CD4-positive, alpha-beta T cell (primary cell): ENCODE measurements at regions of chr12 and their contacts with region 1.

Region 1: DNA sequence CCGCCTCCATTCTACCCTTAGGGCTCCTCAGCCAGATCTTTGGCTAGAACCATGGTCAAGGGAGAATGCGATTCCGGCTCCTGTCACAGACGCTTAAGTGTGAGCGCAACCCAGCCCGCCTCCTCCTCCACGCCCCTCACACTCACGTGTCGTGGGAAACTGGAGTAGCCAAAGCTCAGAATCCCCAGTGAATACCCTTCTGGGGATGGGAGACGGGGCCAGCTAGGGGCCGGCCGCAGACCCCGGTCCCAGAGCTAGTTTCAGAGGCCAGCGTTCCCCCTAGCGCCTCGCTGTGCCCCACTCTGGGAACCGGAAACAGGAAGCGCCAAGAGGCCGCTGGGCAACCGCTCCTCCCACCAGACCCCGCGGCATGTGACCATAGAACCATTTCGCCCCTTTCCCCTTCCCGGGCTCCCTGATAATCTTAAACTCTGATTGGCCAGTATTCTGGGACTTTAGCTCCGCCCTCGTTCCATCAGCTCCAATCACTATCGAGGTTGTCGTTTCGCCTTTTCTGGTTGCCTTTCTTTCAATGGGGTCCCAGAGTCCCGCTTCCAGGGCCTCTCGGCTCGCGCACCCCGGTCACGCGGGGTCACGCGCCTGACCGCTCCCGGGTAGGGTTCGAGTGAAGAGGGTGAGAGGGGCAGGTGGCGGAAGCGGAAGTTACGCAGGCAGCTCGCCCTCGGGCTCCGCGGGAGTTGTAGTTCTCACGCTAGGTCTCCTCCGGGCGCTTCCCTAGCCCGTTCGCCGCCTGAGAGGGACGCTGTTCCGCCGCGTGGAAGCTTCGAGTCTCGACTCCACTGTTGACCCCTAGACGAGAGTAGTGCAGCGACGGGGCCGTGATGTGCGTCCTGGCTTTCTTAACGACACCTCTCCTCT is at the start of gene M6PR:
- DNase-seq: peak; percentile 78 to 95 (median 84)
- ATAC-seq: peak; percentile 71
- H3K4me3 ChIP-seq: peak within 1 kb of the TSS; percentile 79
- H3K4me3 Mint-ChIP-seq: peak within 1 kb of the TSS; percentile 91
- H3K27ac ChIP-seq: peak within 1 kb of the TSS; percentile 95 to 99
- H3K27ac Mint-ChIP-seq: peak within 1 kb of the TSS; percentile 93
- H3K4me1 ChIP-seq: peaks cover 43% of the 10 kb centered on the region
- H3K4me1 Mint-ChIP-seq: peaks cover 72% of the 10 kb centered on the region
- H3K27me3 ChIP-seq: no peaks in the 10 kb centered on the region
- H3K27me3 Mint-ChIP-seq: no peaks in the 10 kb centered on the region
- CTCF ChIP-seq: peak; percentile 67
- total RNA-seq, gene M6PR: 53.4 to 55.8 TPM

Region 2: DNA sequence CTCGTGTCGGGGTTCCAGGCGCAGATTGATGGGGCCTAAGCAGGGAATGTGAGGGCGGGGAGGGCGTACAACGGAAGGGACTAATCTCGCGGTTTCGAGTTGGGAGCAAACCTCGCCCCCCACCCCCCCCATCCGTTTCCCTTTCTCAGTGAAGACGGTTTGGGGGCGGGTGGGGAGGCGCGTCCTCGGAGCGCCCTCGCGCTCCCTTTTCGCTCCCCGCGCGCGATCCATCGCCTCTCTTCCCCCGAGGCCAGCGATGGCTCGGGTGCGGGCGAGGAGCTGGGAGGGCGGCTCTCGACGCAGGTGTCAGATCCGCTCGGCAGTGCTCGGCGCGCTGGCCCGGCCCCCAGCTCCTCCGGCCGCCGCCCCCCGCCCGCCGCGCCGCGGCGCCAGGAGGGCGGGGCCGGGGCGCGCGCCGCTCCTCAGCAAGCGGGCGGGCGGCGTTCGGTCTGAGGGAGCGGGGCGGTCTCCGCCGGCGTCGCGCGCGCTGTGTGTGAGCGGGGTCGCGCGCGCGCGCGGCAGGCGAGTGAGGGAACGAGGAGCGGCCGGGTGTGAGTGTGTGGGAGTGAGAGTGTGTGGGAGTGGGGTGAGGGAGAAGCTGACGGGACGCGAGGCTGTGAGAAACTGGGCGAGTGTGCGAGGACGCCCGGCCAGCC is 252.0 kb before region 1 on chr12 and contains the start of gene RIMKLB:
- CTCF ChIA-PET with region 1: no interaction called
- POLR2A ChIA-PET with region 1: interaction called, 9 read pairs
- intact Hi-C with region 1: loop called in 1 of 2 experiments (anchors 2 kb)
- DNase-seq: peak; percentile 50 to 92 (median 76)
- ATAC-seq: peak; percentile 79
- H3K4me3 ChIP-seq: peak within 1 kb of the TSS; percentile 72
- H3K4me3 Mint-ChIP-seq: peak within 1 kb of the TSS; percentile 99
- H3K27ac ChIP-seq: peak within 1 kb of the TSS; percentile 32 to 62
- H3K27ac Mint-ChIP-seq: peak within 1 kb of the TSS; percentile 83
- H3K4me1 ChIP-seq: peaks cover 12% of the 10 kb centered on the region
- H3K4me1 Mint-ChIP-seq: peaks cover 46% of the 10 kb centered on the region
- H3K27me3 ChIP-seq: no peaks in the 10 kb centered on the region
- H3K27me3 Mint-ChIP-seq: no peaks in the 10 kb centered on the region
- CTCF ChIP-seq: no peak
- total RNA-seq, gene RIMKLB: 14.8 to 15.2 TPM

Region 3: DNA sequence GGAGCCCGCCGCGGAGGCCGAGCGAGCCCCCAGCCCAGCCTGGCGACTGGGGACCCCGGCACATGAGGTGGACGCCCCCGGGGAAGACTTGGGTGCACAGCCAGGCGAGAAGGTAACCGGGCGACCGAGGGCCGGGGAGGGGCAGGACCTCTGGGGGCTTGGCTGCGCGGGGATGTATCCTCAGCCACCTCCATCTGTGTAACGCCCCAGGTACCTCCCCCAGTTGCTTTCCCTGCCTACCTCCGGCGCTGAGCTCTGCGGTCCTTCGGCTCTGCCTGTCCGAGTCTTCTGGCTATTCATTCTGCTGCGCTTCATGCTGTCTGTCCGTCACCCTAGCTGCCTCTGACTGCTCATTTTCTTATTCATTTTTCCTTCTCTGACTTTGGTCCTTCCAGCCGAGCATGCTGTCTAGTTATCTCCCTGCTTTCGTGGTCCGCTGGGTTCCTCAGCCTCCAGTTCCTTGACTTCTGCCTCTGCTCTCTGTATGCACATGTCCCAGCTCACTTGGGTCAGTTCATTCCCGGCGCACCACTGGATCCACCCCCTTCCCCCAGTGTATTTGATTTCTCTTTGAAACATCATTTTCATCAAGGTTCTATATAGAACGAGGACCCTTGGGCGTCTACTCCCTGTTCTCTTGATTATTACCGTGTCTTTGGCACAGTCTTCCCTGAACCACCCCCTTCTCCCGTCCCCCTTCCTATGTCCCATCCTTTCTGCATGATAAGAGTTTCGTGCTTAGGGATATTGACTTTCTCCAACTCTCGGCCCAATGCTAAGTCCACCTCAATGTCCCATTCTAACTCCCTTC is 34.7 kb before region 1 on chr12:
- CTCF ChIA-PET with region 1: interaction called, 32 read pairs
- POLR2A ChIA-PET with region 1: interaction called, 24 read pairs
- intact Hi-C with region 1: loop called (anchors 2 kb)
- DNase-seq: peak; percentile 32 to 83 (median 50)
- ATAC-seq: peak; percentile 81
- H3K4me3 ChIP-seq: peak overlapping the region; percentile 85
- H3K4me3 Mint-ChIP-seq: no peak overlapping the region
- H3K27ac ChIP-seq: no peak overlapping the region
- H3K27ac Mint-ChIP-seq: no peak overlapping the region
- H3K4me1 ChIP-seq: peaks cover 16% of the 10 kb centered on the region
- H3K4me1 Mint-ChIP-seq: peaks cover 18% of the 10 kb centered on the region
- H3K27me3 ChIP-seq: no peaks in the 10 kb centered on the region
- H3K27me3 Mint-ChIP-seq: no peaks in the 10 kb centered on the region
- CTCF ChIP-seq: no peak

Region 4: GRCh38 chr12:8989413-8989812 is 39.8 kb after region 1 on chr12 and contains the start of gene KLRG1:
- CTCF ChIA-PET with region 1: interaction called, 8 read pairs
- POLR2A ChIA-PET with region 1: interaction called, 13 read pairs
- intact Hi-C with region 1: no loop called
- DNase-seq: peak in 2 of 14 experiments; percentile 34 to 63
- ATAC-seq: peak; percentile 37
- H3K4me3 ChIP-seq: peak within 1 kb of the TSS; percentile 50
- H3K4me3 Mint-ChIP-seq: peak within 1 kb of the TSS; percentile 71
- H3K27ac ChIP-seq: peak within 1 kb of the TSS; percentile 49 to 52
- H3K27ac Mint-ChIP-seq: peak within 1 kb of the TSS; percentile 63
- H3K4me1 ChIP-seq: peaks cover 50% of the 10 kb centered on the region
- H3K4me1 Mint-ChIP-seq: peaks cover 70% of the 10 kb centered on the region
- H3K27me3 ChIP-seq: no peaks in the 10 kb centered on the region
- H3K27me3 Mint-ChIP-seq: no peaks in the 10 kb centered on the region
- CTCF ChIP-seq: no peak
- total RNA-seq, gene KLRG1: 8.4 to 10.5 TPM

Region 5: DNA sequence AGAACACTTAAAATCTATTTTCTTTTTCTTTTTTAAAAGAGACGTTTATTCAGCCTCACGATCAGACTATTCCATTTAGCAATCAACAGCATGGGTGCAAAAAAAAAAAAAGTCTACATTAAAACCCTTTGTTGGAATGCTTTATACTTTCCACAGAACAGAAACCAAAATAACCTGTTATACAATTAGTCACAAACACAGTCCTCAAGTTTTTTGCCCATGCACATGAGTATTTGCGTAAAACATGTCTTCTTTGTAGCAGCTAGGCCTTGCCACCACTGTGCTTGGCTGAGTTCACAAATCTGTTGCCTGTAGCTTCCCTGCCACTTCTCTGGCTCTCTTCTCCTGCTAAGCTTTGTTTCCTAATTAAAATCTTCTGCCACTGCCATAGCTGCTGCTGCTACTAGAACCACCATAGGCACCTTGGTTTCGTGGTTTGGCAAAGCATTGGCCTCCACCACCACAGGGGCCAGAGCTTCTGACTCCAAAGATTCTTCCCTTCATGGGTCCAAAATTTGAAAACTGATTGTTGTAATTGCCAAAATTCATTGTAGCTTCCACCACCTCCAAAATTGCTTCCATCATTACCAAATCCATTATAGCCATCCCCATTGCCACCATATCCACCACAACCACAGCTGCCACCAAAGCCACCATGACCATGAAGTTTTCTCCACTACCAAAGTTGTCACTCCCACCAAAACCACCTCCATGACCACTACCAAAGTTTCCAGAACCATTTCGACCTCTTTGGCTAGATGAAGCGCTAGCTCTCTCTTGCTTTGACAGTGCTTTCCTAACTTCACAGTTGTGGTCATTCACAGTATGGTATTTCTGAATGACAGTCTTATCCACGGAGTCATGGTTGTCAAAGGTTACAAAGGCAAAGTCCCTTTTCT is 77.8 kb after region 1 on chr12:
- CTCF ChIA-PET with region 1: interaction called, 25 read pairs
- POLR2A ChIA-PET with region 1: interaction called, 70 read pairs
- intact Hi-C with region 1: loop called in 1 of 2 experiments (anchors 1 kb)
- DNase-seq: peak in 2 of 14 experiments; percentile 21 to 44
- ATAC-seq: no peak
- H3K4me3 ChIP-seq: no peak overlapping the region
- H3K4me3 Mint-ChIP-seq: peak overlapping the region; percentile 58
- H3K27ac ChIP-seq: peak overlapping the region; percentile 63 to 92
- H3K27ac Mint-ChIP-seq: no peak overlapping the region
- H3K4me1 ChIP-seq: peaks cover 83% of the 10 kb centered on the region
- H3K4me1 Mint-ChIP-seq: peaks cover 49% of the 10 kb centered on the region
- H3K27me3 ChIP-seq: no peaks in the 10 kb centered on the region
- H3K27me3 Mint-ChIP-seq: no peaks in the 10 kb centered on the region
- CTCF ChIP-seq: no peak

Region 6: DNA sequence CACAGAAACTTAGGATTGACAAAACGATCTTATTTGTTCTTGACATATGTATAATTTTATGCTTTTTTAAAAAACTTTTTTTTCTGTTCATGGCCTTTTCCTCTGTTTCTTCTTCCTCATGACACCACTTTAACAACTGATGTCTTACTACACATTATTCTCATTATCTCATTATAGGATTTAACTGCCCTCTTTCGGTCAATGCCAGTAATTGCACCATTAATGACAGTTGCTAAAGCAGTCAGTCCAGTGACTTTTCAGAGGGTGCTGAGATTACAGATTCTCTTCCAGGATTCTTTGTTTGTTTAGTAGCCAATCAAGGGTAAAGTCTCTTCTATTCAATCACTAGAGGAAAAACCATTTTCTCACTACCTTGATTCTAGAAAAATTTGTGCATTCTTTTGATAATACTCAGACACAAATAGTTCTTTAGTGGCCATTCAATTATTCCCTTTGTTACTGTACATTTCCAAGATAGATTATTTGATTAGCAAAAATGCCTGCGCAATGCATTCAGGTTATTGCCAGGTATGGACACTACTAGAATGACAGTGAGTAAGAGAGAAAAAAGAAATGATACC is 89.9 kb after region 1 on chr12:
- CTCF ChIA-PET with region 1: interaction called, 57 read pairs
- POLR2A ChIA-PET with region 1: interaction called, 71 read pairs
- intact Hi-C with region 1: loop called (anchors 1 kb)
- DNase-seq: peak in 4 of 14 experiments; percentile 25 to 80 (median 77)
- ATAC-seq: peak; percentile 89
- H3K4me3 ChIP-seq: no peak overlapping the region
- H3K4me3 Mint-ChIP-seq: peak overlapping the region; percentile 21
- H3K27ac ChIP-seq: no peak overlapping the region
- H3K27ac Mint-ChIP-seq: peak overlapping the region; percentile 80
- H3K4me1 ChIP-seq: peaks cover 39% of the 10 kb centered on the region
- H3K4me1 Mint-ChIP-seq: peaks cover 63% of the 10 kb centered on the region
- H3K27me3 ChIP-seq: no peaks in the 10 kb centered on the region
- H3K27me3 Mint-ChIP-seq: no peaks in the 10 kb centered on the region
- CTCF ChIP-seq: peak; percentile 88

Region 7: DNA sequence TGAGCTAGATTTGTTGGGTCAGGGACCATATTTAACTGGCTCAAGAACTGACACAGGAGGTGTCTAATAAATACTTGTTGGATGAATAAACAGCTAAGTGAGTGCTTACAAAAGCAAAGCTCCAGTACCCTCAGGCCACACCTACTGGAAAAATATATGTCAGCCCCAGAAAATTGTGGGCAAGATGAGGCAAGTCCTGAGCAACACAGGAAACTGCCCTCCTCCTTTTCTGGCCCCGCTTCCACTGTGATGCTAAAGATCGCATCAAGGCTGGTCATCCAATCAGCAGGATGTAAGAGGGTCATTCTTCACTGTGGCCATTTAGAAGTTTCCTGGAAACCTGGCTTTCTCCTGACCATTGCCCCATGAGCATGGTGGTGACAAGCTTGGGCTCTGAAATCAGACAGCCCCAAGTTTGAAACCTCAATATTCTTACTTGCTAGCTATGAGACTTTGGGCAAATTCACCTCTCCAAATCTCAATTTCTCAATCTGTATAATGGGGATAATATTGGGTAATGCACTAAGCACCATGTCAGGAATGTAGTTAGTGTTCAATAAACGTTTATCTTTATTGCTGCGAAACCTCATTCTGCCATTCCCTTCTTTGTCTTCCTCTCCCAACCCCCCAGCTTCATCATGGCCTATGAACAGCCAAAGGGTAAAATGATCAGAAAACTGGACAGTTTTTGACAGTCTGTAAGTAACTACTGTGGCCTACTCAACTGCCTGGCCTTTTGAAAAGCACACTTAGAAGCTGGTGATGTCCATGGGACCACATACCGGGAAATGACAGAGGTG is 397.9 kb after region 1 on chr12:
- CTCF ChIA-PET with region 1: no interaction called
- POLR2A ChIA-PET with region 1: no interaction called
- intact Hi-C with region 1: no loop called
- DNase-seq: no peak
- ATAC-seq: no peak
- H3K4me3 ChIP-seq: no peak overlapping the region
- H3K4me3 Mint-ChIP-seq: no peak overlapping the region
- H3K27ac ChIP-seq: no peak overlapping the region
- H3K27ac Mint-ChIP-seq: no peak overlapping the region
- H3K4me1 ChIP-seq: peaks cover 3% of the 10 kb centered on the region
- H3K4me1 Mint-ChIP-seq: peaks cover 52% of the 10 kb centered on the region
- H3K27me3 ChIP-seq: no peaks in the 10 kb centered on the region
- H3K27me3 Mint-ChIP-seq: no peaks in the 10 kb centered on the region
- CTCF ChIP-seq: no peak